HEK293T (cell line): ENCODE measurements at regions of chr19 and their contacts with region 1.

Region 1: GRCh38 chr19:41449079-41449864 is 6.3 kb downstream of the ERICH4 start:
- DNase-seq: peak; percentile 87

Region 2: DNA sequence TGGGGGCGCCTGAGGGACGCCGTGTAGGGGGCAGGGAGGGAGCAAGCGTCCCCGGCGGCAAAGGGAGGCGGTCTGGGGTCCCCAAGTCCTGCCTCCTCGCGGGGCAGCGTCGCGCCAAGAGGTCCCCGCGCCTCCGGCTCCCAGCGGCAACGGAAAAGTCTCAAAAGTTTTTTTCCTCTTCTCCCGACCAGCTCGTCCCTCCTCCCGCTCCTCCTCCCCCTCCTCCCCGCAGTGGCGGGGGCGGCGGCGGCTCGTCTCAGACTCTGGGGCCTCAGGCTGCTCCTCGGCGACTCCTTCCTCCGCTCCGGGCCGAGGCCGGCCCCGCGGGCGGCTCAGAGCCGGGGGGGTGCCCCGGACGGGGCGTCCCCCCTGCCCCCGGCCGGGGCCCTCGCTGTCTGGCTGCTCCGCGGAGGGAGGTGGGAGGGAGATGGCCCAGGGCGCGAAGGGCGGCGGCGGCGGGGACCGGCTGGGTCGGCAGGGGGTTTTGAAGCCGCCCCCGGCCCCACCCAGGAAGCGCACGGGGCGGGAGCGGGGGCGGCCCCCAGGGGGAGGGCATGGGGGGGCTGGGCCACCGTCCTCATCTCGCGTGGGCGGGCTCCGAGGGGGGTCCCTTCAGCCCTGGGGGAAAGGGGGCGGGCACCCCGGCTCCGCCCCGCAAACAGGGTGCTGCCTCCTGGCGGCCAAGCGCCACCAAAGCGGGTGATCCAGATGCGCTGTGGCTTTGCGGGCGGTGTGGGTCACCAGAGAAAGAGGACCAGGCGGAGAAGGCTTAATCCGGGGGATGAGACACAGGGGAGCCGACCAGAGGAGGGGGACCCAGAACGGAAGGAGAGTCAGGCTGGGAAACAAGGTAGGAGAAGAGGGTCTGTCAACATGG is 95.6 kb before region 1 on chr19 and contains the start of gene TGFB1:
- CTCF ChIA-PET with region 1: no interaction called
- POLR2A ChIA-PET with region 1: no interaction called
- DNase-seq: peak; percentile 83

Region 3: GRCh38 chr19:41563854-41564514 is 114.7 kb after region 1 on chr19:
- CTCF ChIA-PET with region 1: interaction called, 16 read pairs
- POLR2A ChIA-PET with region 1: interaction called, 6 read pairs
- DNase-seq: no peak